Naive thymus-derived CD8-positive, alpha-beta T cell (primary cell): ENCODE measurements at regions of chr11 and their contacts with region 1.

Region 1: GRCh38 chr11:65013692-65014145 is 241 bp upstream of the ARL2 start:
- DNase-seq: peak; percentile 83 to 93 (median 90)
- ATAC-seq: peak; percentile 82 to 89
- H3K4me3 Mint-ChIP-seq: peak overlapping the region; percentile 86 to 94 (median 89)
- H3K27ac Mint-ChIP-seq: peak overlapping the region; percentile 82 to 99 (median 94)
- H3K4me1 Mint-ChIP-seq: peaks cover 17 to 31% (median 29%) of the 10 kb centered on the region in 4 donors
- H3K27me3 Mint-ChIP-seq: no peaks in the 10 kb centered on the region

Region 2: GRCh38 chr11:65040847-65041621 is 27.3 kb after region 1 on chr11 and contains the start of gene SAC3D1:
- POLR2A ChIA-PET with region 1: interaction called, 11 read pairs
- DNase-seq: peak; percentile 75 to 92 (median 85)
- ATAC-seq: peak; percentile 91 to 92
- H3K4me3 Mint-ChIP-seq: peak within 1 kb of the TSS; percentile 90 to 96 (median 93)
- H3K27ac Mint-ChIP-seq: peak within 1 kb of the TSS; percentile 78 to 95 (median 92)
- H3K4me1 Mint-ChIP-seq: peaks cover 5 to 27% (median 19%) of the 10 kb centered on the region in 4 donors
- H3K27me3 Mint-ChIP-seq: no peaks in the 10 kb centered on the region
- polyA plus RNA-seq, gene SAC3D1: 6.7 to 13.9 (median 10.7) TPM